ENCODE measurements at regions of chr14 and their contacts with region 1.

Region 1: GRCh38 chr14:21965042-21965441 is 291.4 kb upstream of the OR4E1 start:
- DNase-seq: no peak
- H3K4me3 ChIP-seq: no peak overlapping the region
- H3K27ac ChIP-seq: no peak overlapping the region
- H3K4me1 ChIP-seq: no peaks in the 10 kb centered on the region
- H3K27me3 ChIP-seq: no peaks in the 10 kb centered on the region
- CTCF ChIP-seq: no peak
- EP300 ChIP-seq: no peak
- POLR2A ChIP-seq: no peak
- RAD21 ChIP-seq: no peak

Region 2: DNA sequence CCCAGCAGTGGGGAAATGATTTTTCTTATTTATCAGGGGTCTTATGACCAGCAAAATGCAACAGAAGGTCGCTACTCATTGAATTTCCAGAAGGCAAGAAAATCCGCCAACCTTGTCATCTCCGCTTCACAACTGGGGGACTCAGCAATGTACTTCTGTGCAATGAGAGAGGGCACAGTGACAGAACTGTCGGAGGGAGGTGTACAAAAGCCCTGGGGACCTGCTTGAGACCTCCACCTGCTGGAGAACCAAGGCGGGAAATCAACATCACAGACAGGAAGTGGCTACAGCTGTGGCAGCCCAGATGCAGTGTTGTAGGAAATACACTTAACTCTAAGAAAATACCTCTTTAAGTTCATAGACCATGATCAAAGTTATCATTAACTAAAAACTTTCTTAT is 40.6 kb before region 1 on chr14:
- CTCF ChIA-PET with region 1: no interaction called
- POLR2A ChIA-PET with region 1: no interaction called
- DNase-seq: no peak
- H3K4me3 ChIP-seq: no peak overlapping the region
- H3K27ac ChIP-seq: no peak overlapping the region
- H3K4me1 ChIP-seq: no peaks in the 10 kb centered on the region
- H3K27me3 ChIP-seq: no peaks in the 10 kb centered on the region
- CTCF ChIP-seq: peak in 2 of 3 experiments; percentile 28 to 37; a peak in 2 of 4 replicates
- EP300 ChIP-seq: no peak
- POLR2A ChIP-seq: no peak
- RAD21 ChIP-seq: no peak

Region 3: DNA sequence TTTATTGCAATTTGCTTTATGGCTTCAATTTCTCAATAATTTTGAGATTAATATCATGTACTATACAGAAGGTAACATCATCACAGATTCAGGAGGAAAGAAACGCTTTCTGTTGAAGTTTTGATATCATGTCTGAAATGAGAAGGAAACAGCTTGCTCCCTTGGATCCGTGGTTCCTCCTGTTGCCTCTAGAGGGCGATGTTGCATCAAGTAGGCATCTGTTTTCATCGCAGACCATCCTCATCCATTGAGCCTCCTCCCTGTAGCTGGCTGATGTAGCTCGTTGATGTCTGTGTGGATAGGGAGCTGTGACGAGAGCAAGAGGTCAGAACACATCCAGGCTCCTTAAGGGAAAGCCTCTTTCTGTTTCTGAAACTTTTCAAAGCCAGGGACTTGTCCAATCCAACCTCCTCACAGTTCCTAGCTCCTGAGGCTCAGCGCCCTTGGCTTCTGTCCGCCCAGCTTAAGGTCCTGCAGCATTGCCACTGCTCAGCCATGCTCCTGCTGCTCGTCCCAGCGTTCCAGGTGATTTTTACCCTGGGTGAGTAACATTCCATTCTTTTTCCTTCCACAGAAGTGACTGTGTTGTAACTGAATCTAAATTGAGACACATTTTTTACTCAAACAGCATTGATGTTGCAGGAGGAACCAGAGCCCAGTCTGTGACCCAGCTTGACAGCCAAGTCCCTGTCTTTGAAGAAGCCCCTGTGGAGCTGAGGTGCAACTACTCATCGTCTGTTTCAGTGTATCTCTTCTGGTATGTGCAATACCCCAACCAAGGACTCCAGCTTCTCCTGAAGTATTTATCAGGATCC is 13.3 kb after region 1 on chr14:
- CTCF ChIA-PET with region 1: interaction called, 11 read pairs
- POLR2A ChIA-PET with region 1: no interaction called
- DNase-seq: peak in 1 of 2 experiments; percentile 84
- H3K4me3 ChIP-seq: no peak overlapping the region
- H3K27ac ChIP-seq: no peak overlapping the region
- H3K4me1 ChIP-seq: no peaks in the 10 kb centered on the region
- H3K27me3 ChIP-seq: peaks cover 0 to 1% (median 0%) of the 10 kb centered on the region in 4 experiments; a peak in 1 of 7 replicates
- CTCF ChIP-seq: peak; percentile 81 to 93 (median 89)
- EP300 ChIP-seq: no peak
- POLR2A ChIP-seq: no peak
- RAD21 ChIP-seq: peak; percentile 61 to 65

Measured in H1 (cell line).